ENCODE measurements at regions of chr3 and their contacts with region 1.

Region 1: DNA sequence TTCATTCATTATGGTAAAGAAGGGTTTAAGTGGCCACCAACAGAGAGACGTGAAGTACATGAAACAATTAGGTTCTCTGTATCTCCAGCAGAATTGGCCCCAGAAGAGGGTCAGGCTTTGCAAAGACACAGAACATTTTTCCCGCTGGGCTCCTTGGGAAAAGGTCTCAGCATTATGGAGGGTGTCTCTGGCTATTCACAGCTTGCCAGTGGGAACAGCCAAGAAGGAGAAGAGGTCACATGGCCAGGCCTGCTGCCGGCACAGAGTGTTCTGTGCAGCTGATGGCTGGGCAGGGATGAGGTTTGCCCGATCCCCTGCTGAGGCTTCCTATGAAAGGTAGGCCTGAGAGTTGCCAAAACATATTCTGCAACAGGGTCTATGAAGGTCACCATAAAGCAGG is 77.8 kb upstream of the LPP start:
- DNase-seq: no peak
- H3K4me3 ChIP-seq: no peak overlapping the region
- H3K27ac ChIP-seq: no peak overlapping the region
- H3K4me1 ChIP-seq: peaks cover 16% of the 10 kb centered on the region
- CTCF ChIP-seq: no peak

Region 2: GRCh38 chr3:187889601-187890404 is 186.4 kb before region 1 on chr3:
- CTCF ChIA-PET with region 1: no interaction called
- POLR2A ChIA-PET with region 1: no interaction called
- intact Hi-C with region 1: no loop called
- DNase-seq: peak; percentile 36
- H3K4me3 ChIP-seq: no peak overlapping the region
- H3K27ac ChIP-seq: no peak overlapping the region
- H3K4me1 ChIP-seq: peaks cover 8% of the 10 kb centered on the region
- CTCF ChIP-seq: no peak

Region 3: GRCh38 chr3:188061133-188061532 is 15.0 kb before region 1 on chr3:
- CTCF ChIA-PET with region 1: no interaction called
- POLR2A ChIA-PET with region 1: interaction called, 17 read pairs
- intact Hi-C with region 1: no loop called
- DNase-seq: peak; percentile 75
- H3K4me3 ChIP-seq: no peak overlapping the region
- H3K27ac ChIP-seq: no peak overlapping the region
- H3K4me1 ChIP-seq: peaks cover 33% of the 10 kb centered on the region
- CTCF ChIP-seq: peak; percentile 72

Region 4: DNA sequence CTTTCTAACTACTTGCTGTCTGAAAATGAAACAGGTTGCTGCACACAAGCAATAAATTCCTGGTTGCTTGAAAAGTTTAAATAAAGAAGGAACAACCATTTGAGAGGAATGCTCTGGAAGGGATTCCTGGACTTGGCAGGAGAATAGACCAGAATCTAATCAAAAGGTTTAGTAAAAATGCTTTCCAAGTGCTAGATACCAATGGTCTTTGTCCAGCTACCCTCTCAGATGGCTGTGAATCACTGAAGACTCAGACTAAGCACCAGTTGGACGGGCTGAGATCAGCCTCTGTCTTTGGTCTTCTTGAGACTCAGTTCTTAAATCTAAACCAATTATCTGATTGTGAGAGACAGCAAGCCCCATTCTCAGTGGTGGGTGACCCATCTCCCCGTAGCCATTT is 50.1 kb after region 1 on chr3:
- CTCF ChIA-PET with region 1: no interaction called
- POLR2A ChIA-PET with region 1: no interaction called
- intact Hi-C with region 1: no loop called
- DNase-seq: no peak
- H3K4me3 ChIP-seq: no peak overlapping the region
- H3K27ac ChIP-seq: no peak overlapping the region
- H3K4me1 ChIP-seq: peaks cover 41% of the 10 kb centered on the region
- CTCF ChIP-seq: no peak

Region 5: DNA sequence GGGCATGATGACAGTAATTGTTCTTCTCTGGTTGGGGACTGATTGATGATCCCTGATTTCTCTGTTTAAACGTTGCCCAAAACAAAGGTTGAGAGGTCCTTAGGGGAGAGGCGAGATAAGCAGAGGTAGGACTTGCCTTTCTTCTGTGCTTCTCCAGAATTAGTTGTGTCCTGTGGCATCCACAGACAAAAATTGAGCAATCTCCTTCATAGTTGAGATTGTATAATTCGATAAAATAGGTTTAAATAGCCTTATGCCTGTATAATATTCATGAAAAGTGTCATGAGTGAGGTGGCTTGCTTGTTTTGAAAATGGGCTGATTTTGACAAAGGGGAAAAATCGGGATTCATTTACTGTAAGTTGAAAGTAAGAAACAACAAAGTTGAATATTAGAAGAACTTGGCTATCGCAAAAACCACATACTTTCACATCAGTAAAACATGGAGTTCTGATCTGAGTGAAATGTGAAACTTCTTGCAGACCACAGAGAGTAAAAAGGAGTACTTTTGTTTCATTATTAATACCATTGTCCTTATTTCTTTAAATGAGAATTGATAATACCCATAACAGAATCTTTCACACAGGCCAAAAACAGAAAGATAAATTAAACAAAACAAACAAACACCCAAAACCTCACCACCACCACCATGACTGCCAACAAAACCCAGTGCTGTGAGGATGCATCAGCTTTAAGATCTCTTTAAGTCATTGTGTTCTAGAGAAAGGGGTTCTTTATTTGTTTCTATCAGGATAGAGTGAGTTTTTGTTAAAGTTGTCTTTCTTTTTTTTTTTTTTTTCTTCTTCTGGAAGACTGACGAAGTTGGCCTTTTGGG is 233.5 kb after region 1 on chr3:
- CTCF ChIA-PET with region 1: no interaction called
- POLR2A ChIA-PET with region 1: no interaction called
- intact Hi-C with region 1: no loop called
- DNase-seq: no peak
- H3K4me3 ChIP-seq: no peak overlapping the region
- H3K27ac ChIP-seq: no peak overlapping the region
- H3K4me1 ChIP-seq: peaks cover 9% of the 10 kb centered on the region
- CTCF ChIP-seq: no peak

Measured in OCI-LY7 (cell line).